Right cardiac atrium (tissue), 5 donors: ENCODE measurements at regions of chr1 and their contacts with region 1.

Region 1: GRCh38 chr1:31548907-31549808 is 27.2 kb upstream of the TINAGL1 start:
- DNase-seq: peak; percentile 77 to 92 (median 86)
- ATAC-seq: peak; percentile 92 to 94
- H3K4me3 ChIP-seq: no peak overlapping the region
- H3K27ac ChIP-seq: no peak overlapping the region
- H3K4me1 ChIP-seq: peaks cover 4% of the 10 kb centered on the region
- H3K27me3 ChIP-seq: no peaks in the 10 kb centered on the region

Region 2: DNA sequence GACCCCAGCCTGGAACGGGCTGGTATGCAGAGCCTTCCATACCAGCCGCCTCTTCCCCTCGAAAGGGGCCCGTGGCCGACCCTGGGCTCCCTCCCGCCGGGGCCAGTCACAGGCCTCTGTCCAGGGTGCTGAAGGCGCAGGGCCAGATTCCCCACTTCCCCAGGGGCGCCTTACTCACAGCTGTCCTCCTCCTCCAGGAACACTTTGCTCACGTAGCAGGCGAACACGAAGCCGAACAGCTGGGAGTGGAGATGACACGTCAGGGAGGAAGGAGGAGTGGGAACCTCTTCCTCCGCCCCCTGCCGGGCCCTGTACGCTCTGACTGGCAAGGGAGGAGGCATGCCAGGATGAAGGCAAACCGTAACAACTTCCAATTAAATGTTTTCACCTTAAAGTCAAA is 366.8 kb before region 1 on chr1:
- intact Hi-C with region 1: loop called in 2 of 4 experiments (anchors 5 to 10 kb)
- DNase-seq: peak; percentile 81 to 90 (median 90)
- ATAC-seq: peak; percentile 86 to 92
- H3K4me3 ChIP-seq: peak overlapping the region; percentile 16
- H3K27ac ChIP-seq: no peak overlapping the region
- H3K4me1 ChIP-seq: no peaks in the 10 kb centered on the region
- H3K27me3 ChIP-seq: no peaks in the 10 kb centered on the region

Region 3: DNA sequence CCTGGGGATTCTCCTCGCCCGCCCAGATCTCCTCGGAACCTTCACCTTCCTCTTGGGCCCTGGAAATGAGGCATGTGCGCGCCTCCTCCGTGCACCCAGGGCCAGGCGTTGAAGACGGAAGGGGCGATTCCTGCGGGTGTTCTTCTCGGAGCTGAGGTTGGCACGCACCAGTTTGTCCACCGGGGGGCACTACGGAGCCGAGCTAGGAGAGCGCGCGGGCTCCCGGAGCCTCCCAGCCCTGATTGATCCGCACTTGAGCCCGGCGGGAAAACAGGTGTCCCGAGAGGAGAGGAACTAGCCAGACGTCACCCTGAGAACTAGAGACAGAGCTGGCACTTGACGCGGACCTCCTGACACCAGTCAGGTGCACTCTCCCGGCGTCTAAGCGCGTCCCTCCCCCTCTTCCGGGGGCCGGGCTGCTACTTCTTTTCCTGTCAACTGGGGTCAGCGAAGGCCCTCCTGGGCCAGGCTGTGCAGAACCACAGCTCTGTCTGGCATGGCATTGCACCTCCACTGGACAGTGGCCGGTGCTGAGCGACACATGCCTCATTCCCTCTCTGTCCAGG is 154.4 kb before region 1 on chr1:
- intact Hi-C with region 1: loop called in 1 of 4 experiments (anchors 10 kb)
- DNase-seq: peak; percentile 80 to 93 (median 91)
- ATAC-seq: peak; percentile 89 to 95
- H3K4me3 ChIP-seq: peak overlapping the region; percentile 36
- H3K27ac ChIP-seq: peak overlapping the region; percentile 11
- H3K4me1 ChIP-seq: peaks cover 2% of the 10 kb centered on the region
- H3K27me3 ChIP-seq: no peaks in the 10 kb centered on the region

Region 4: GRCh38 chr1:31460027-31460426 is 89.1 kb before region 1 on chr1:
- intact Hi-C with region 1: loop called in 1 of 4 experiments (anchors 5 kb)
- DNase-seq: no peak
- ATAC-seq: no peak
- H3K4me3 ChIP-seq: no peak overlapping the region
- H3K27ac ChIP-seq: no peak overlapping the region
- H3K4me1 ChIP-seq: no peaks in the 10 kb centered on the region
- H3K27me3 ChIP-seq: peaks cover 2% of the 10 kb centered on the region

Region 5: GRCh38 chr1:32013386-32014198 is 464.4 kb after region 1 on chr1 and contains the start of gene KHDRBS1:
- intact Hi-C with region 1: no loop called
- DNase-seq: peak; percentile 99 to 100 (median 100)
- ATAC-seq: peak; percentile 96
- H3K4me3 ChIP-seq: peak within 1 kb of the TSS; percentile 68
- H3K27ac ChIP-seq: peak within 1 kb of the TSS; percentile 95
- H3K4me1 ChIP-seq: peaks cover 4% of the 10 kb centered on the region
- H3K27me3 ChIP-seq: no peaks in the 10 kb centered on the region
- total RNA-seq, gene KHDRBS1: 65.4 to 70.0 (median 69.0) TPM